ENCODE measurements at regions of chr20 and their contacts with region 1.

Region 1: GRCh38 chr20:4613718-4614620 is 107.7 kb upstream of the PRND start:
- DNase-seq: peak; percentile 69
- H3K4me3 ChIP-seq: no peak overlapping the region
- H3K27ac ChIP-seq: no peak overlapping the region
- H3K4me1 ChIP-seq: no peaks in the 10 kb centered on the region
- H3K27me3 ChIP-seq: peaks cover 0 to 2% of the 10 kb centered on the region in 2 experiments
- CTCF ChIP-seq: peak; percentile 50 to 53
- POLR2A ChIP-seq: no peak

Region 2: DNA sequence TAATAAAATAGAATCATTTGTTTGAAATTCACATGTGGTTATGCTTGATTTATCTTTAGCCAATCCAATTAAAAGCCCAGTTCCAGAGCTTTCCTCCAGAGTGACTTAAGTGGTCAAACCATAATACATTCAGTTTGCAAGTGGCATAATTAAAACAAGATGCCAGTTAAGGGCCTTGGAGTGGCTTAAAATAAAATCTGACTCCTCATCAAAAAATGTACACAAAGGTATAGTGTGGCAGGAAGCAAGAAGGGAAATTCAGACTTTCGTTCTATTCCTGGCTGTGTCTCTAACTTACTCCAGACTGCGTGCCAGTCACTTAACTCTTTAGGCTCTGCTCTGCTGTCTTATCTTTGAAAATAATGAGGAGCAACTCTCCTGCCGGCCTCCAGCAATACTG is 143.6 kb before region 1 on chr20:
- CTCF ChIA-PET with region 1: no interaction called
- POLR2A ChIA-PET with region 1: no interaction called
- dilution Hi-C with region 1: no loop called
- intact Hi-C with region 1: no loop called
- DNase-seq: no peak
- H3K4me3 ChIP-seq: no peak overlapping the region
- H3K27ac ChIP-seq: no peak overlapping the region
- H3K4me1 ChIP-seq: no peaks in the 10 kb centered on the region
- H3K27me3 ChIP-seq: peaks cover 0 to 10% of the 10 kb centered on the region in 2 experiments
- CTCF ChIP-seq: no peak
- POLR2A ChIP-seq: no peak

Region 3: GRCh38 chr20:4625687-4626086 is 11.7 kb after region 1 on chr20:
- CTCF ChIA-PET with region 1: interaction called, 10 read pairs
- POLR2A ChIA-PET with region 1: no interaction called
- dilution Hi-C with region 1: no loop called
- intact Hi-C with region 1: no loop called
- DNase-seq: no peak
- H3K4me3 ChIP-seq: no peak overlapping the region
- H3K27ac ChIP-seq: peak overlapping the region; percentile 93
- H3K4me1 ChIP-seq: peaks cover 22% of the 10 kb centered on the region
- H3K27me3 ChIP-seq: no peaks in the 10 kb centered on the region
- CTCF ChIP-seq: no peak
- POLR2A ChIP-seq: no peak

Region 4: DNA sequence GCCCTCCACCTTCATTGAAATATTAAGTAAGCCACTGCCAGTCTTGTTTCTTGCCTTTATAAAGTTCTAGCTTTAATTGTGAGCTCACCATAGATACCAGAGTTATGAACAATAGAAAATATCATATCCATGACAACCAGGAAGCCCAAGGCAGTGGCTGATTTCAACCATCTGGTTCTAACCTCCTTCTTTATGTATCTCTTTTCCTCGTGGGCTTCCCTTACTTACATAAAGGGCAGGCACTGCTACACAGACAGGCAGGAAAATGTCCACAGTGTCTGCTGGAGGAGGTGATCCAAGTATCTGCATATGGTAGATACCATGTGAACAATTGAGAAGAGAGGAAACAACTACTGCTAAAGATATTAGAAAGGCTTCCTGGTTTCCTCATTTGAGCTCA is 42.5 kb after region 1 on chr20:
- CTCF ChIA-PET with region 1: interaction called, 10 read pairs
- POLR2A ChIA-PET with region 1: no interaction called
- dilution Hi-C with region 1: no loop called
- intact Hi-C with region 1: no loop called
- DNase-seq: peak; percentile 97
- H3K4me3 ChIP-seq: no peak overlapping the region
- H3K27ac ChIP-seq: peak overlapping the region; percentile 72
- H3K4me1 ChIP-seq: peaks cover 10% of the 10 kb centered on the region
- H3K27me3 ChIP-seq: peaks cover 16 to 19% of the 10 kb centered on the region in 2 experiments
- CTCF ChIP-seq: no peak
- POLR2A ChIP-seq: no peak

Region 5: GRCh38 chr20:4691753-4692152 is 77.8 kb after region 1 on chr20:
- CTCF ChIA-PET with region 1: interaction called, 23 read pairs
- POLR2A ChIA-PET with region 1: no interaction called
- dilution Hi-C with region 1: no loop called
- intact Hi-C with region 1: no loop called
- DNase-seq: peak; percentile 21
- H3K4me3 ChIP-seq: no peak overlapping the region
- H3K27ac ChIP-seq: no peak overlapping the region
- H3K4me1 ChIP-seq: peaks cover 15% of the 10 kb centered on the region
- H3K27me3 ChIP-seq: no peaks in the 10 kb centered on the region
- CTCF ChIP-seq: no peak
- POLR2A ChIP-seq: no peak

Region 6: GRCh38 chr20:4708856-4709255 is 94.9 kb after region 1 on chr20:
- CTCF ChIA-PET with region 1: interaction called, 13 read pairs
- POLR2A ChIA-PET with region 1: no interaction called
- dilution Hi-C with region 1: no loop called
- intact Hi-C with region 1: no loop called
- DNase-seq: no peak
- H3K4me3 ChIP-seq: no peak overlapping the region
- H3K27ac ChIP-seq: no peak overlapping the region
- H3K4me1 ChIP-seq: peaks cover 7% of the 10 kb centered on the region
- H3K27me3 ChIP-seq: peaks cover 0 to 8% of the 10 kb centered on the region in 2 experiments
- CTCF ChIP-seq: no peak
- POLR2A ChIP-seq: no peak

Region 7: DNA sequence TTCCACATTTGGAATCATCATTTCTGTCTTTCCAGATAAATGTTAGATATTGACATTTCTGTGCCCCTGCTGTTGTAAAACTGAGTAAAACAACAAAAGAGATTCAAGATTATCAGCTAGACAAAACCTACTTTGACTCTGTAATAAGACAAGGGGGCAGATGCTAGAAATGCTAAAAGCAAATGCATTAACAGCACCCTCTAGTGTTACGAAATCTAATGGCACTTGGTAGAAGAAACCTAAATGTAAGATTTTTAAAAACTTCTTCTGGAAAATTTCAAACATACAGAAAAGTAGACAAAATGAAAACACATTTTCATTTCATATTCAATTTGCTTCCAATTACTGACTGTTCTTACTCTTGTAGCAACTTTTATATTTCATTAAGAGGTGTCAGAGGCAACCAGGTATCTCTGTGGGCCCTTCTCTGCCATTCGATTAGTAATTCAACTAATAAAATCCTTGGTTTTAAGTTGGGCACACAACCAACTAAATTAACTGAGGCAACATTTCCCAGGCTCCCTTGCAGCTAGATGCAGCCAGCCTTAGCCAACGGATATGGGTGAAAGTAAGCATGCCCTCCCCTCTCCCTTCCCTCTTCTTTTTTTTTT is 342.3 kb after region 1 on chr20:
- CTCF ChIA-PET with region 1: interaction called, 10 read pairs
- POLR2A ChIA-PET with region 1: interaction called, 10 read pairs
- dilution Hi-C with region 1: no loop called
- intact Hi-C with region 1: loop called (anchors 5 kb)
- DNase-seq: peak; percentile 79
- H3K4me3 ChIP-seq: no peak overlapping the region
- H3K27ac ChIP-seq: no peak overlapping the region
- H3K4me1 ChIP-seq: peaks cover 3% of the 10 kb centered on the region
- H3K27me3 ChIP-seq: no peaks in the 10 kb centered on the region
- CTCF ChIP-seq: peak; percentile 45 to 68
- POLR2A ChIP-seq: no peak

Measured in endothelial cell of umbilical vein (primary cell).